ENCODE measurements at regions of chr6 and their contacts with region 1.

Region 1: GRCh38 chr6:125956506-125957390 is at the start of gene HINT3:
- DNase-seq: peak; percentile 96 to 98
- H3K4me3 ChIP-seq: peak within 1 kb of the TSS; percentile 99
- H3K4me3 Mint-ChIP-seq: no peak within 1 kb of the TSS
- H3K27ac Mint-ChIP-seq: peak within 1 kb of the TSS; percentile 59
- H3K4me1 ChIP-seq: peaks cover 7% of the 10 kb centered on the region
- H3K4me1 Mint-ChIP-seq: peaks cover 14% of the 10 kb centered on the region
- H3K27me3 ChIP-seq: no peaks in the 10 kb centered on the region
- H3K27me3 Mint-ChIP-seq: no peaks in the 10 kb centered on the region
- CTCF ChIP-seq: peak; percentile 93 to 95
- total RNA-seq, gene HINT3: 20.2 and 24.6 TPM in 2 replicates

Region 2: GRCh38 chr6:125790358-125791150 is 166.2 kb before region 1 on chr6 and contains the start of gene NCOA7:
- CTCF ChIA-PET with region 1: interaction called, 33 read pairs
- POLR2A ChIA-PET with region 1: interaction called, 3 read pairs
- intact Hi-C with region 1: loop called (anchors 1 kb)
- DNase-seq: peak; percentile 82 to 84
- H3K4me3 ChIP-seq: peak within 1 kb of the TSS; percentile 91
- H3K4me3 Mint-ChIP-seq: peak within 1 kb of the TSS; percentile 91
- H3K27ac Mint-ChIP-seq: peak within 1 kb of the TSS; percentile 88
- H3K4me1 ChIP-seq: peaks cover 20% of the 10 kb centered on the region
- H3K4me1 Mint-ChIP-seq: peaks cover 13% of the 10 kb centered on the region
- H3K27me3 ChIP-seq: no peaks in the 10 kb centered on the region
- H3K27me3 Mint-ChIP-seq: no peaks in the 10 kb centered on the region
- CTCF ChIP-seq: no peak
- total RNA-seq, gene NCOA7: 62.0 and 67.9 TPM in 2 replicates

Region 3: GRCh38 chr6:125899726-125900182 is 57.0 kb before region 1 on chr6:
- CTCF ChIA-PET with region 1: interaction called, 58 read pairs
- POLR2A ChIA-PET with region 1: interaction called, 6 read pairs
- intact Hi-C with region 1: loop called (anchors 2 kb)
- DNase-seq: peak; percentile 69 to 75
- H3K4me3 ChIP-seq: peak overlapping the region; percentile 29
- H3K4me3 Mint-ChIP-seq: peak overlapping the region; percentile 71
- H3K27ac Mint-ChIP-seq: peak overlapping the region; percentile 53
- H3K4me1 ChIP-seq: peaks cover 41% of the 10 kb centered on the region
- H3K4me1 Mint-ChIP-seq: peaks cover 26% of the 10 kb centered on the region
- H3K27me3 ChIP-seq: no peaks in the 10 kb centered on the region
- H3K27me3 Mint-ChIP-seq: no peaks in the 10 kb centered on the region
- CTCF ChIP-seq: peak; percentile 18 to 33

Region 4: DNA sequence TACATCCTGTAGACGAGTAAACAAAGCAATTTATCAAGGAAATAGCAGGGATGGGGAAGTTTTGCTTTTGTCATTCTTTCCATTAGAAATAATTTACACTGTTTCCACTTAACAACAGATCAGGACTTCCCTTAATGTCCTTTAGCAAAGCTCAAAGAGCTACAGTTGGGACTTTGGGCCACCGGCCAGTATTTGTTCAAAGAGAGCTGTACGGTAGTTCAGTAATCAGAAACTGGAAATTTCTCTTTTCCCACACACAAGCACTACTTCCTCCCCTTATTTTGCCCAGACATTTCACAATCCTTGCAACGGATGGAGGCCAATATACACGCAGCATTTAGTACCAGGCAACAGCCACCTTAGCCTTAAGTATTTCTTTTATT is 12.3 kb before region 1 on chr6:
- CTCF ChIA-PET with region 1: interaction called, 30 read pairs
- POLR2A ChIA-PET with region 1: interaction called, 5 read pairs
- intact Hi-C with region 1: loop called (anchors 1 kb)
- DNase-seq: peak in 1 of 2 experiments; percentile 46
- H3K4me3 ChIP-seq: no peak overlapping the region
- H3K4me3 Mint-ChIP-seq: peak overlapping the region; percentile 27
- H3K27ac Mint-ChIP-seq: no peak overlapping the region
- H3K4me1 ChIP-seq: peaks cover 98% of the 10 kb centered on the region
- H3K4me1 Mint-ChIP-seq: peaks cover 52% of the 10 kb centered on the region
- H3K27me3 ChIP-seq: no peaks in the 10 kb centered on the region
- H3K27me3 Mint-ChIP-seq: no peaks in the 10 kb centered on the region
- CTCF ChIP-seq: no peak

Region 5: GRCh38 chr6:125986300-125987025 is 29.7 kb after region 1 on chr6 and contains the start of gene TRMT11:
- CTCF ChIA-PET with region 1: interaction called, 11 read pairs
- POLR2A ChIA-PET with region 1: interaction called, 6 read pairs
- intact Hi-C with region 1: no loop called
- DNase-seq: peak; percentile 93 to 94
- H3K4me3 ChIP-seq: peak within 1 kb of the TSS; percentile 67
- H3K4me3 Mint-ChIP-seq: no peak within 1 kb of the TSS
- H3K27ac Mint-ChIP-seq: no peak within 1 kb of the TSS
- H3K4me1 ChIP-seq: peaks cover 27% of the 10 kb centered on the region
- H3K4me1 Mint-ChIP-seq: no peaks in the 10 kb centered on the region
- H3K27me3 ChIP-seq: no peaks in the 10 kb centered on the region
- H3K27me3 Mint-ChIP-seq: no peaks in the 10 kb centered on the region
- CTCF ChIP-seq: no peak
- total RNA-seq, gene TRMT11: 31.5 and 36.7 TPM in 2 replicates

Region 6: DNA sequence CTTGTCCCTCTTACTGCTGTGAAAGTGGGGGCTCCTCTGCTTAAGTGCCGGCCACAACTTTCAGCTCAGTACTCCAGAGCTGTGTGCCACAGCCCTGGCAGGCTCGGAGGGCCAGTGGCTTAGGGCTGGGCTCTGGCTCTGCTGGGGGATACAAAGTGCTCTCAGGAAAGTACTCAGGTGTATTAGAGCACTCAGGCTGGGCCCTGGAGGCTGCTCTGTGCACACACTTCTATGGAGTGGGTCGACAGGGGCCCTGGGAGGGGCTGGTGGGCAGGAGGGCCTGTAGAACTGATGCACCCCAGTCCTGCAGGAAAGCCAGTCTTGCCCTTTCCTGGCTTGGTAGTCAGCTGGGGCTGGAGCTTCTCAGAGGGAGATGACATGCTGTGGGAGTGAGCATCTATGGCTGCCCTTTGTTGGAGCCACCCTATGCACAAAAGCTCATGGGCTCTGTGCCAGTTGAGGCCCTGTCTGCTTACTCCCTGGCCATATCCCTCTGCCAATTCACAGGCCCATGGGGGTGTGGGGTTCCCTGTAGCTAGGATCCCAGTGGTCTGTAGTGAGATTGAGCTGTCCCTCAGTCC is 405.2 kb after region 1 on chr6:
- CTCF ChIA-PET with region 1: no interaction called
- POLR2A ChIA-PET with region 1: no interaction called
- intact Hi-C with region 1: no loop called
- DNase-seq: no peak
- H3K4me3 ChIP-seq: no peak overlapping the region
- H3K4me3 Mint-ChIP-seq: no peak overlapping the region
- H3K27ac Mint-ChIP-seq: no peak overlapping the region
- H3K4me1 ChIP-seq: no peaks in the 10 kb centered on the region
- H3K4me1 Mint-ChIP-seq: no peaks in the 10 kb centered on the region
- H3K27me3 ChIP-seq: no peaks in the 10 kb centered on the region
- H3K27me3 Mint-ChIP-seq: no peaks in the 10 kb centered on the region
- CTCF ChIP-seq: no peak